IMR-90 (cell line): ENCODE measurements at regions of chr9 and their contacts with region 1.

Region 1: GRCh38 chr9:124940693-124941453 is at the start of gene GOLGA1:
- DNase-seq: peak; percentile 93
- ATAC-seq: peak; percentile 89
- H3K4me3 ChIP-seq: peak within 1 kb of the TSS; percentile 84
- H3K27ac ChIP-seq: peak within 1 kb of the TSS; percentile 93
- H3K4me1 ChIP-seq: peaks cover 4% of the 10 kb centered on the region; the same call in 1 of the 2 replicates
- H3K27me3 ChIP-seq: no peaks in the 10 kb centered on the region
- CTCF ChIP-seq: 0 out of 2 replicates have a peak, but pooled peaks have one; percentile 1
- POLR2A ChIP-seq: peak; percentile 89
- RAD21 ChIP-seq: peak; percentile 4; the same call in 1 of the 2 replicates
- total RNA-seq, gene GOLGA1: 10.6 and 11.9 TPM in 2 replicates

Region 2: GRCh38 chr9:124764774-124765438 is 176.0 kb before region 1 on chr9:
- CTCF ChIA-PET with region 1: no interaction called
- POLR2A ChIA-PET with region 1: no interaction called
- dilution Hi-C with region 1: no loop called
- in situ Hi-C with region 1: no loop called
- intact Hi-C with region 1: no loop called
- DNase-seq: no peak
- ATAC-seq: peak; percentile 37
- H3K4me3 ChIP-seq: no peak overlapping the region
- H3K27ac ChIP-seq: no peak overlapping the region
- H3K4me1 ChIP-seq: no peaks in the 10 kb centered on the region
- H3K27me3 ChIP-seq: peaks cover 75% of the 10 kb centered on the region
- CTCF ChIP-seq: peak; percentile 40
- POLR2A ChIP-seq: no peak
- RAD21 ChIP-seq: peak; percentile 42

Region 3: GRCh38 chr9:124776954-124777665 is 163.8 kb before region 1 on chr9 and contains the start of gene OLFML2A:
- CTCF ChIA-PET with region 1: no interaction called
- POLR2A ChIA-PET with region 1: no interaction called
- dilution Hi-C with region 1: no loop called
- in situ Hi-C with region 1: no loop called
- intact Hi-C with region 1: no loop called
- DNase-seq: no peak
- ATAC-seq: peak; percentile 33
- H3K4me3 ChIP-seq: peak within 1 kb of the TSS; percentile 78
- H3K27ac ChIP-seq: peak within 1 kb of the TSS; percentile 8
- H3K4me1 ChIP-seq: peaks cover 20% of the 10 kb centered on the region
- H3K27me3 ChIP-seq: peaks cover 3% of the 10 kb centered on the region; the same call in 1 of the 2 replicates
- CTCF ChIP-seq: peak; percentile 55
- POLR2A ChIP-seq: no peak
- RAD21 ChIP-seq: peak; percentile 40; the same call in 1 of the 2 replicates
- total RNA-seq, gene OLFML2A: 1.4 and 2.0 TPM in 2 replicates

Region 4: GRCh38 chr9:124960409-124960752 is 19.5 kb after region 1 on chr9:
- CTCF ChIA-PET with region 1: no interaction called
- POLR2A ChIA-PET with region 1: no interaction called
- dilution Hi-C with region 1: no loop called
- in situ Hi-C with region 1: no loop called
- intact Hi-C with region 1: loop called (anchors 2 kb)
- DNase-seq: peak; percentile 83
- ATAC-seq: no peak; the same call in none of the 2 replicates
- H3K4me3 ChIP-seq: no peak overlapping the region
- H3K27ac ChIP-seq: peak overlapping the region; percentile 86
- H3K4me1 ChIP-seq: no peaks in the 10 kb centered on the region; the same call in 1 of the 2 replicates
- H3K27me3 ChIP-seq: no peaks in the 10 kb centered on the region
- CTCF ChIP-seq: no peak
- POLR2A ChIP-seq: no peak
- RAD21 ChIP-seq: no peak

Region 5: GRCh38 chr9:125495172-125496092 is 554.6 kb after region 1 on chr9:
- CTCF ChIA-PET with region 1: no interaction called
- POLR2A ChIA-PET with region 1: no interaction called
- dilution Hi-C with region 1: no loop called
- in situ Hi-C with region 1: no loop called
- intact Hi-C with region 1: no loop called
- DNase-seq: no peak
- ATAC-seq: no peak
- H3K4me3 ChIP-seq: no peak overlapping the region
- H3K27ac ChIP-seq: no peak overlapping the region
- H3K4me1 ChIP-seq: peaks cover 8% of the 10 kb centered on the region
- H3K27me3 ChIP-seq: no peaks in the 10 kb centered on the region
- CTCF ChIP-seq: no peak
- POLR2A ChIP-seq: no peak
- RAD21 ChIP-seq: no peak